Activated CD4-positive, alpha-beta memory T cell treated with anti-CD3 and anti-CD28 coated beads, Interleukin-2, amount 10 ng/mL, durations not matched to agents 7 days and 5 days (primary cell): ENCODE measurements at regions of chr1 and their contacts with region 1.

Region 1: GRCh38 chr1:34984793-34985608 is at the start of gene TMEM35B:
- DNase-seq: peak; percentile 83
- H3K4me3 Mint-ChIP-seq: peak within 1 kb of the TSS; percentile 94
- H3K27ac Mint-ChIP-seq: peak within 1 kb of the TSS; percentile 81
- H3K4me1 Mint-ChIP-seq: peaks cover 39% of the 10 kb centered on the region
- H3K27me3 Mint-ChIP-seq: no peaks in the 10 kb centered on the region
- total RNA-seq, gene TMEM35B: 38.7 to 42.4 TPM

Region 2: GRCh38 chr1:34852677-34853217 is 132.3 kb before region 1 on chr1:
- CTCF ChIA-PET with region 1: interaction called, 19 read pairs
- POLR2A ChIA-PET with region 1: interaction called, 5 read pairs
- DNase-seq: peak; percentile 92
- H3K4me3 Mint-ChIP-seq: no peak overlapping the region
- H3K27ac Mint-ChIP-seq: peak overlapping the region; percentile 61
- H3K4me1 Mint-ChIP-seq: peaks cover 21% of the 10 kb centered on the region
- H3K27me3 Mint-ChIP-seq: no peaks in the 10 kb centered on the region

Region 3: GRCh38 chr1:34865981-34866761 is 118.8 kb before region 1 on chr1:
- CTCF ChIA-PET with region 1: interaction called, 11 read pairs
- POLR2A ChIA-PET with region 1: interaction called, 7 read pairs
- DNase-seq: peak; percentile 91
- H3K4me3 Mint-ChIP-seq: peak overlapping the region; percentile 77
- H3K27ac Mint-ChIP-seq: peak overlapping the region; percentile 69
- H3K4me1 Mint-ChIP-seq: peaks cover 26% of the 10 kb centered on the region
- H3K27me3 Mint-ChIP-seq: peaks cover 11% of the 10 kb centered on the region

Region 4: GRCh38 chr1:34946211-34946610 is 38.8 kb before region 1 on chr1:
- CTCF ChIA-PET with region 1: no interaction called
- POLR2A ChIA-PET with region 1: no interaction called
- DNase-seq: no peak
- H3K4me3 Mint-ChIP-seq: no peak overlapping the region
- H3K27ac Mint-ChIP-seq: no peak overlapping the region
- H3K4me1 Mint-ChIP-seq: no peaks in the 10 kb centered on the region
- H3K27me3 Mint-ChIP-seq: peaks cover 11% of the 10 kb centered on the region

Region 5: GRCh38 chr1:35030756-35031446 is 45.9 kb after region 1 on chr1:
- CTCF ChIA-PET with region 1: interaction called, 13 read pairs
- POLR2A ChIA-PET with region 1: interaction called, 43 read pairs
- DNase-seq: peak; percentile 46
- H3K4me3 Mint-ChIP-seq: peak overlapping the region; percentile 99
- H3K27ac Mint-ChIP-seq: peak overlapping the region; percentile 87
- H3K4me1 Mint-ChIP-seq: peaks cover 29% of the 10 kb centered on the region
- H3K27me3 Mint-ChIP-seq: peaks cover 3% of the 10 kb centered on the region

Region 6: GRCh38 chr1:35192853-35193664 is 208.1 kb after region 1 on chr1 and contains the start of gene SFPQ:
- CTCF ChIA-PET with region 1: no interaction called
- POLR2A ChIA-PET with region 1: interaction called, 13 read pairs
- DNase-seq: peak; percentile 97
- H3K4me3 Mint-ChIP-seq: peak within 1 kb of the TSS; percentile 94
- H3K27ac Mint-ChIP-seq: peak within 1 kb of the TSS; percentile 99
- H3K4me1 Mint-ChIP-seq: peaks cover 44% of the 10 kb centered on the region
- H3K27me3 Mint-ChIP-seq: peaks cover 2% of the 10 kb centered on the region
- total RNA-seq, gene SFPQ: 319 to 328 TPM